ENCODE measurements at regions of chr1 and their contacts with region 1.

Region 1: DNA sequence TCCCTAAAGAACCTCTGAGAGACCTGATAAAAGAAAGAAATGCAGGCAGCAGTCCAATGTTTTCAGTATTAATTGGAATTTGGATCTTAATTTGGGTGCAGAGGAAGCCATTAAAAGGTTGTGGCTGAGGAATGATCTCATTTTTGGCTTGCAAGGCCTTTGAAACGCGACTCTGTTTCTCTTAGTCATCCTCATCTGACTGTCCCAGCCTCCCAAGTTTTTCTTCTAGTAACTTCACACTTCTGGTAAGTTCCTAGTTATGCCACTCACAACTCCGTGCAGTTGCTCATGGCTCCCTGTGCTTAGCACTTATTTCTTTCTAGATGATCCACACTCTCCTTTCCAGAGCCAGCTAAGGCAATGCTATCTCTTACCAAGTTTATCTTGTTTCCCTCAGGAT is 147.4 kb upstream of the USP24 start:
- DNase-seq: peak; percentile 10
- H3K4me3 ChIP-seq: no peak overlapping the region
- H3K27ac ChIP-seq: peak overlapping the region; percentile 22
- H3K27me3 ChIP-seq: no peaks in the 10 kb centered on the region
- CTCF ChIP-seq: no peak

Region 2: DNA sequence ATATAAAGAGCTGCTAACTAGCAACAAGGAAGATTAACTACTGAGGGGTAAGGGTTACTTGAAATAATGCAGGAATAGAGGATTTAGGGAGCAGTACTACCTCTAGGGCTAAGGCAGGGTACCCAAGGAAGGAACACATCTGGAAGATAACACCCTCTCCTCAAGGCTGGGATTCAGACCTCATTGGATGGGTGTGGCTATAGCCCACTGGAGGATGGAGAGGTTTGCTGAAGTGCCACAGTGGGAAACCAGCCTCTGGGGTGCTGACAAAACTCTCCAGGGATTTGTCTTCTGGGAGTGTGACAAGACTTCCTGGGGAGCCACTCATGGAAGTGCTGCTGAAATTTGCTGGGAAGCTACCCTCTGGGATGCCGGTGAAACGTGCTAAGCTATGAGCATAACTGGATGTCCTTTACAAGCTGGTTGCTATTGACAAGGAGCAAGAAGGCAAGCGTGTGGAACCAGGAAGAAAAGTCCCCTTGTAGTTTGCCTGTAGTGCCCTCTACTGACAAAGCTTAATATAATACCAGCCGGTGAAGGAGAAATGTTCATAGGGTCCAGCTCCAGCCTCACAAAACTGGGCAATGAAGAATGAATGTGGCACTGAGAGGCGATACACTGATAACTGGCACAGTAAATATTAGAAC is 24.6 kb before region 1 on chr1:
- CTCF ChIA-PET with region 1: interaction called, 12 read pairs
- POLR2A ChIA-PET with region 1: no interaction called
- DNase-seq: no peak
- H3K4me3 ChIP-seq: no peak overlapping the region
- H3K27ac ChIP-seq: no peak overlapping the region
- H3K27me3 ChIP-seq: no peaks in the 10 kb centered on the region
- CTCF ChIP-seq: peak; percentile 67

Region 3: DNA sequence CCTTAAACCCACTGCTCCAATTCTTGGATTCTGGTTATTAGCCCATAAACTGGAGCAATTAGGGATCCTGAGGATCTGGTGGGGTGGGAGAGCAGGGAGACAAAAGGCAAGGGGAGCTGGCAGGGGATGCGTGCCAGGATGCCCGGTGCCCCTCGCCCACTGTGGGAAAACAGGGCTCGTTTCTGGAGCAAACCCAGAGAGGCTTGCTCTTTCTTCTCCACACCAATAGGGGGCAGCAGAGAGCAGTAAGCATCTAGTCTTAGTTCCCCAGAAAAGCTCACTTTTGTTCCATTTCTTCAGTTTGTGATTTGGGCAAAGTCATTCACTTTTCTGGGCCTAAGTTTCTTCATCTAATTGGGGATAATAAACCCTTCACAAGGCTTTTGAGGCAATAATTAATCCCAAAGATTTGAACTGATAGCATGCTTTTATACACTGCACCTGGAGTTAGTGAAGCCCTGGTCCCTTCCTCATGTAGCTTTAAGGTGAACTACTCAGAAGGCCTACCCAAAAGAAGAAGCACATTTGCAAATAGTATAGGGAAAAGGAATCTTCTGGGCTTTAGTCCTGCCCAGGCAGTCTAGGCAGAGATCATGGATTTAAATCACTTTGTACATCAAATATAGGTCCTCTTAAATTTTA is 13.2 kb after region 1 on chr1:
- CTCF ChIA-PET with region 1: interaction called, 16 read pairs
- POLR2A ChIA-PET with region 1: no interaction called
- DNase-seq: peak; percentile 13
- H3K4me3 ChIP-seq: no peak overlapping the region
- H3K27ac ChIP-seq: no peak overlapping the region
- H3K27me3 ChIP-seq: no peaks in the 10 kb centered on the region
- CTCF ChIP-seq: peak; percentile 91

Measured in AG04450 (cell line).